ENCODE measurements at regions of chr5 and their contacts with region 1.

Region 1: GRCh38 chr5:135332519-135333150 is 66.4 kb downstream of the MACROH2A1 start:
- DNase-seq: no peak
- ATAC-seq: peak in 1 of 2 donors; percentile 31
- H3K4me3 ChIP-seq: no peak overlapping the region
- H3K27ac ChIP-seq: no peak overlapping the region
- H3K4me1 ChIP-seq: peaks cover 0 to 13% of the 10 kb centered on the region in 2 donors
- H3K27me3 ChIP-seq: no peaks in the 10 kb centered on the region
- CTCF ChIP-seq: peak; percentile 25 to 55 (median 43)
- POLR2A ChIP-seq: no peak

Region 2: GRCh38 chr5:135034236-135034962 is 298.2 kb before region 1 on chr5:
- in situ Hi-C with region 1: no loop called
- intact Hi-C with region 1: loop called (anchors 10 kb)
- DNase-seq: no peak
- ATAC-seq: peak; percentile 20 to 43
- H3K4me3 ChIP-seq: peak overlapping the region; percentile 41 to 53 (median 52)
- H3K27ac ChIP-seq: peak overlapping the region in 3 of 4 donors; percentile 56 to 78 (median 62)
- H3K4me1 ChIP-seq: peaks cover 25 to 26% of the 10 kb centered on the region in 2 donors
- H3K27me3 ChIP-seq: peaks cover 75 to 86% (median 84%) of the 10 kb centered on the region in 3 donors
- CTCF ChIP-seq: no peak
- POLR2A ChIP-seq: no peak

Region 3: DNA sequence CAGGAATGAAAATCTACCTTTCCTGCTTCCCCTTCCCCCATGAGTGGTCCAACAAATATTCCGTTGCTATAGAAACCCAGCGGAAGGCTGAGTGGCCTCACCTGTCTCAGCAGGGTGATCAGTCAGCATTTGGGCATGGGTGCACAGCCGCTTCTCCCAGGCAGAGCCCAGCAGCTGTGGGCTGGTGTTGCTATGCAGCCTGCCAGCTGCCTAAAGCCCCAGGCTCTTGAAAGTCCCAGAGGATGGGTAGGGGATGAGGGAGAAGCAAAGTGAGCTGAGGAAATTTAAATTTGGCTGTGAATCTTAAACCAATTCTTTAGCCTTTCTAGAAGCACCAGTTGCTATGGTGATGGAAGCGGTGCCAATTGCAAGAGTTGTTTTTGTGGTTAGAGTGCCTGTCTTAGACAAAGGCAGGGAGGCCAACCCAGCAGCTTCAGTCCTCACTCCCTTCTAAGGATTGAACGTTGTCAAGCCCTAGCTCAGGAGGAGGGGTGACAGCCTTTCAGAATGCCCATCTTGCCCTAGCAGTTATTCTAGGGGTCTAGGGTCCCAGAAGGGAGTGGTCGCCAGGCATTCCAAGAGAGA is 147.1 kb before region 1 on chr5:
- in situ Hi-C with region 1: loop called in 2 of 4 experiments (anchors 10 kb)
- intact Hi-C with region 1: loop called (anchors 2 kb)
- DNase-seq: no peak
- ATAC-seq: no peak
- H3K4me3 ChIP-seq: no peak overlapping the region
- H3K27ac ChIP-seq: no peak overlapping the region
- H3K4me1 ChIP-seq: no peaks in the 10 kb centered on the region
- H3K27me3 ChIP-seq: no peaks in the 10 kb centered on the region
- CTCF ChIP-seq: no peak
- POLR2A ChIP-seq: no peak

Region 4: GRCh38 chr5:135410348-135410747 is 77.7 kb after region 1 on chr5:
- in situ Hi-C with region 1: no loop called
- intact Hi-C with region 1: no loop called
- DNase-seq: no peak
- ATAC-seq: no peak
- H3K4me3 ChIP-seq: no peak overlapping the region
- H3K27ac ChIP-seq: no peak overlapping the region
- H3K4me1 ChIP-seq: no peaks in the 10 kb centered on the region
- H3K27me3 ChIP-seq: no peaks in the 10 kb centered on the region
- CTCF ChIP-seq: no peak
- POLR2A ChIP-seq: no peak

Measured in gastrocnemius medialis (tissue), 4 donors.